Activated CD4-positive, alpha-beta memory T cell treated with anti-CD3 and anti-CD28 coated beads, Interleukin-2, amount 10 ng/mL, durations not matched to agents 7 days and 5 days (primary cell): ENCODE measurements at regions of chr9 and their contacts with region 1.

Region 1: DNA sequence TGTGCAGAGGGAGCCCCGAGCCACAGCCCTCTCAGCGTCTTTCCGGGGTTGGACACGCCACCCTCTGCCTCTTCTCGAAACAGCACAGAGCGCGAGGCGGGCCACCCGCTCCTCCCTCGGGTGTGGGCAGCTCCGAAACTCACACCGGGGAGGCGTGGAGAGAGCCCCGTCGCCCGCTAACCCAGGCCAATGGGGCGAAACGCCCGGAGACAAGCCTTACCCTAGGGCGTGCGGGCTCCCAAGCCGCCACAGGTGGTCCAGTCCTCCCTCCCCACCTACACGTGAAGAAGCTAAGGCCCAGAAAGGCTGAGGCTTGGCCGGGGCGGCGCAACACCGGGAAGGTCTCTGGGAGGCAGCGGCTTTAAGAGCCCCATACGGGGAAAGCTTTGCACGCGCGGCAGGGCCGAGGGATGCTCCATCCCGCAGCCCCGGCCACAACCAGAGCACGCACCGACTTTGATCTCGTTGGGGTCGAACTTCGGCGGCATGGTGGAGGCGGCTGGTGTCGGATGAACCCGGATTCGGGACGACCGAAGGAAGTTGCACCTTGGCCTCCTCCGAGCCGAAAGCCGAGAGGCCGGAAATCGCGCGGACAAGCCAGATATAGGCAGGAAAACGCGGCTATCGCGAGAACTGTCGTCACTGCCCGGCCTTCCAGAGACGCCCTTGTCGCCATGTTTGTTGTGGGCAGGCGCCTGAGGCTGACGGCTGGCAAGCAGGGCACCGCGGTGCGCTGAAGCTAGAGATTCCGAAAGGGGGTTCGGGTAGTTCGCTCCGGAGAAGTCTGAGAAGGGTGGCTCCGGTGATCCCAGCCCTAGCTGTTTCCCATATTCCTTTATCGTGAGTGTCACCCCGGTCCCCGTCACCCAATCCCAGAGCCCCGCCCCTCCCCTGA is at the starts of genes LRSAM1 and RPL12:
- DNase-seq: peak; percentile 98
- H3K4me3 Mint-ChIP-seq: peak within 1 kb of the TSS; percentile 84
- H3K27ac Mint-ChIP-seq: peak within 1 kb of the TSS; percentile 97
- H3K4me1 Mint-ChIP-seq: peaks cover 51% of the 10 kb centered on the region
- H3K27me3 Mint-ChIP-seq: no peaks in the 10 kb centered on the region
- total RNA-seq, gene LRSAM1: 25.4 to 26.9 TPM
- total RNA-seq, gene RPL12: 1,379 to 1,395 TPM

Region 2: DNA sequence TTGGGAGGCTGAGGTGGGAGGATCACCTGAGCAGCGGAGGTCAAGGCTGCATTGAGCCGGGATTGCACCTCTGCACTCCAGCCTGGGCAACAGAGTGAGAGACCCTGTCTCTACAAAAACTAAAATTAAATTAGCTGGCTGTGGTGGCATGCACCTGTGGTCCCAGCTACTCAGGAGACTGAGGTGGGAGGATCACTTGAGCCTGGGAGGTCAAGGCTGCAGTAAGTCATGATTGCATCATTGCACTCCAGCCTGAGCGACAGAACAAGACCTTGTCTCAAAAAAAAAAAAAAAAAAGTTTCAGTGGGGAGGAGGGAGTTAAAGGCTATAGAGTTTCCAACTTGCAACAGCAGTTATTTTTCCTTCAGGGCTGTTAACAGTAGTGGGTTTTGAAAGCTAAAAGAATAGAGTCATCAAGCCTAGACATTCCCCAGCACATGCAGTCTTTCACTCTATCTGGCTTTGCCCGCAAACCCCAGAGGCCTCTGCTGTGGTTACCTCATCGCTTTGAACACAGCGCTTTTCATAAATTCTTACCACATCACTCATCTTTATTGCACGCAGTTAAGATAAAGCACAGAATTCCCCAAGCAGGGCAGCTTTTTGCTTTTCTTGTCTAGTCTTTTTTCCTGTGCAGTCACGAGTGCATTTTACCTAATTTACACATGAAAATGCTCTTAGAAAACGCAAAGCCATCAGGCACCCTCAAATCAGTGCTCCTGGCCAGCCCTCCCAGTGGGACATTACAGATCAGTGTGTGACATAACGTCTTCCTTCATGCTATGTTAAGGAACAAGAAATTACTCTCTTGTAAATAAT is 62.8 kb before region 1 on chr9:
- CTCF ChIA-PET with region 1: interaction called, 3 read pairs
- POLR2A ChIA-PET with region 1: interaction called, 21 read pairs
- DNase-seq: peak; percentile 90
- H3K4me3 Mint-ChIP-seq: peak overlapping the region; percentile 38
- H3K27ac Mint-ChIP-seq: peak overlapping the region; percentile 32
- H3K4me1 Mint-ChIP-seq: peaks cover 29% of the 10 kb centered on the region
- H3K27me3 Mint-ChIP-seq: peaks cover 50% of the 10 kb centered on the region

Region 3: DNA sequence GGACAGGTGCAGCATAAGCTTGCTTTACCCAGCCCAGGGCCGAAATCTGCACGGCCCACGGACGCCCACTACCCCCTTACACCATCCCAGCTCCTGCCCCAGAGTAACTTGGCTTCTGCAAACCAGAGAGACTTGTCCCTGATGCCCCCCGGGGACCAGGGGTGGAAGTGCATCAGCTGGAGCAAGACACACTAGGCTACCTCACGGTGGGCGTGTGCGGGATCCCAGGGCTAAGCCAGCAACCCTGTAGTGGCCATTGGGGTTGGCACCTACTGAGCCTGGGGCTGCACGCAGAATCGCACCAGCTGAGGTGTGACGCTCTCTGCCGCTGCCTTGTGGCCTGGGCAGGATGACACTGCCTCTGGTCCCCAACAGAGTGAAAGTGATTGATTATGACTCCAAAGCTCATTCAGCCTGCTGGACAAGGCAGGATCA is 33.0 kb before region 1 on chr9:
- CTCF ChIA-PET with region 1: no interaction called
- POLR2A ChIA-PET with region 1: interaction called, 75 read pairs
- DNase-seq: peak; percentile 53
- H3K4me3 Mint-ChIP-seq: no peak overlapping the region
- H3K27ac Mint-ChIP-seq: no peak overlapping the region
- H3K4me1 Mint-ChIP-seq: peaks cover 14% of the 10 kb centered on the region
- H3K27me3 Mint-ChIP-seq: no peaks in the 10 kb centered on the region

Region 4: DNA sequence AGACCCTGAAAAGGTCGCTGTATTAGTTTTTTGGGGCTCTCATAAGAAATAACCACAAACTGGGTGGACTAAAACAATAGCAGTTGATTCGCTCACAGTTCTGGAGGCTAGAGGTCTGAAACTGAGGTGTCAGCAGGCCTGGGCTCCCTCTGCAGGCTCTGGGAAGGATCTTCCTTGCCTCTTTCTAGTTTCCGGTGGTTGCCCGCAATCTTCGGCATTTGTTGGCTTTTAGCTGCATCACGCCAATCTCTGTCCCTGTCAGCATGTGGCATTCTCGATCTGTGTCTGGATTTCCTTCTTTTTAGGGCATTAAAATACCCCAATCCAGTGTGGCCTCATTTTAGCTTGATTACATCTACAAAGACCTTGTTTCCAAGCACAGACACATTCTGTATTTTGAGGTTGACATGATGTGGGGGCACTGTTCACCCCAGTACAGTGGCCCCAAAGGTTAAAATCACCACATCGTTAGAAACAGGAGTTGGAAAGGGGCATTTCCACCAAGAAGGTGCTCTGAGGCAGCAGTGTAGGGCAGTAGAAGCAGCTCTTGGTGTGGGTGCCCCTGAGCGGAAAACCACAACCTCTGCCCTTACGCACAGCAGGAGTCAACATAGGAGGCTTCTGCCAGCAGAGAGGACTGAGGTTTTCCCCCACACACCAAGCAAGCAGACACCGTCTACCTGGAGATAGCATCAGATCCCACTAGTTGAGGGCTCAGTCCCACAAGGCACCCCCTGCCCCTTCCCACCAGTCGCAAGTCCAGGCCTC is 13.4 kb before region 1 on chr9:
- CTCF ChIA-PET with region 1: interaction called, 5 read pairs
- POLR2A ChIA-PET with region 1: interaction called, 33 read pairs
- DNase-seq: peak; percentile 45
- H3K4me3 Mint-ChIP-seq: no peak overlapping the region
- H3K27ac Mint-ChIP-seq: peak overlapping the region; percentile 83
- H3K4me1 Mint-ChIP-seq: peaks cover 16% of the 10 kb centered on the region
- H3K27me3 Mint-ChIP-seq: no peaks in the 10 kb centered on the region